ENCODE measurements at regions of chr19 and their contacts with region 1.

Region 1: DNA sequence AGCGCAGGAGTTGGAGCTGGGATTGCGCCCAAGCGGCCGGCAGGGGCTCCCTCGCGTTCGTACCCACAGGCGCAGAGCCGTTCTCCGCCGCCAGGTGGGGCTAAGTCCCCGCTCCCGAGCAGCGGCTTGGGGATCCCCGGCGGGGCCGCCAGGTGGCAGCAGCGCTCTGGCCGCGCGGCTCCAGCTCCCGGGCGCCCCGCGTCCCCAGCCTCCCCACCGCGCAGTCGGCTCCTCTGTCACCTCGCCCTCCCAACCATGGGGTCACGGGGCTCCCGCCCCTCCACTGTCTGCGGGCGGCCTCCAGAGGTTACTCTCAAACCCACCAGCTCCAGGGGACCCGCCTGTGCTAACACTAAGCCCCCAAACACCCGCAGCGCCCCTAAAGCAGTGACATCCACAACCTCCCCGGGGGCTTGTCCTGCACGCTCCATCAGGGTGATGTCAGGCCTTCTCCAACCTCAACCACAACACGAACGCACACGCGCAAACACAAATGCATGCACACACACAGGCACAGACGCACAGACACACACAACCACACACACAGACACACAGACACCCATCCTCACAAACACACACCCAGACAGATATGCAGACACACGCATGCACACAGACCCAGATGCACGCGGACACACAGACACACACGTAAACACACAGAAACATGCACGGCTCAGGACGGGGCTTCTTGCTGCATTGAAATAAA is 18.4 kb upstream of the KCTD15 start:
- DNase-seq: peak; percentile 84
- ATAC-seq: peak; percentile 93
- H3K4me3 Mint-ChIP-seq: no peak overlapping the region
- H3K27ac Mint-ChIP-seq: no peak overlapping the region
- H3K4me1 Mint-ChIP-seq: peaks cover 8% of the 10 kb centered on the region
- H3K27me3 Mint-ChIP-seq: peaks cover 17% of the 10 kb centered on the region

Region 2: GRCh38 chr19:33430674-33431277 is 347.5 kb before region 1 on chr19:
- CTCF ChIA-PET with region 1: interaction called, 13 read pairs
- DNase-seq: peak; percentile 69
- ATAC-seq: peak; percentile 86
- H3K4me3 Mint-ChIP-seq: no peak overlapping the region
- H3K27ac Mint-ChIP-seq: no peak overlapping the region
- H3K4me1 Mint-ChIP-seq: peaks cover 4% of the 10 kb centered on the region
- H3K27me3 Mint-ChIP-seq: peaks cover 3% of the 10 kb centered on the region

Region 3: GRCh38 chr19:33690378-33691029 is 87.7 kb before region 1 on chr19:
- CTCF ChIA-PET with region 1: no interaction called
- DNase-seq: no peak
- ATAC-seq: no peak
- H3K4me3 Mint-ChIP-seq: no peak overlapping the region
- H3K27ac Mint-ChIP-seq: no peak overlapping the region
- H3K4me1 Mint-ChIP-seq: no peaks in the 10 kb centered on the region
- H3K27me3 Mint-ChIP-seq: peaks cover under 1% of the 10 kb centered on the region

Region 4: DNA sequence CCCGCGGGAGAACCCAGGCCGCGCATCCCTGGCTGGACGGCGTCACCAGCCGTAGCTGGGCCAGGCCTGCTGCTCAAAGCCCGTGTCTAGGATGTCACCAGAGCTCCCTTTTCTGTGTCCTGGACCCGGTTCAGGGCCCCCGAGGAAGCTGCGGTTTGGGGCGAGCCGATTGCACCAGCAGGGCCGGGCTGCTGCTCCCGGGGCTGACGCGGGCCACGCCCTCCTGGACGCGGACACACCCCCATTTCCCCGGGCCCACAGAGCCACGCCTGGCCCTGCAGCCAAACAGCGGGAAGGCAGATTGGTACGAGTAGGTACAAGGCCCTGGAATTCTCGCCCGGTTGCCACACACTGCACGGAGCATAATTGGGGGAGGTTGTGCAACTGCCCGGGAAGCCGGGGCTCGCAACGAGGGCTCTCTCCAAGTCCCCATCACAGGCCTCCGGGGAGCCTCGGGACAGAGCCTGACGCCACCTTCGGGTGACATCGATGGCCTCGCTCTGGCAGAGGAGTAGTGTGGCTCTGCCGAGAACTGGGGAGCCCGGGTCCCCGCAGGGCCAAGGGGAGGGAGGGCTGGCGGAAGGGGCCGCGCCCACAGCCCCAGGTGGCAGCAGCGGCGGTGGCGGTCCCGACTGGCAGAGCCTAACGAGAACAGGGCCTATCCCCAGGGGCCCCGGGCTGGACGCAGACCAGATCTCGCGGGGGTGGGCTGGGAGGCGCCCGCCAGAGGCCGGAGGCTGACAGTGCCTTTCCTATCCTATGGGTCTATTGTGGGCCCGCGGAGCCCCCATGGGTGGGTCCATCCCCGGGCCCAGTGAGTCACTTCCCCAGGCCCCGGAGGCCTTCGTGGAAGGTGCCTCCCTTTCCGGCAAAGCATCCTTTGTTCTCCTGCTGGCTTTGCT is 41.9 kb after region 1 on chr19:
- CTCF ChIA-PET with region 1: interaction called, 24 read pairs
- DNase-seq: peak; percentile 79
- ATAC-seq: peak; percentile 89
- H3K4me3 Mint-ChIP-seq: peak overlapping the region; percentile 62
- H3K27ac Mint-ChIP-seq: peak overlapping the region; percentile 43
- H3K4me1 Mint-ChIP-seq: peaks cover 21% of the 10 kb centered on the region
- H3K27me3 Mint-ChIP-seq: peaks cover 23% of the 10 kb centered on the region

Region 5: GRCh38 chr19:34096020-34096915 is 318.0 kb after region 1 on chr19:
- CTCF ChIA-PET with region 1: interaction called, 51 read pairs
- DNase-seq: no peak
- ATAC-seq: no peak
- H3K4me3 Mint-ChIP-seq: no peak overlapping the region
- H3K27ac Mint-ChIP-seq: no peak overlapping the region
- H3K4me1 Mint-ChIP-seq: no peaks in the 10 kb centered on the region
- H3K27me3 Mint-ChIP-seq: peaks cover 23% of the 10 kb centered on the region

Region 6: DNA sequence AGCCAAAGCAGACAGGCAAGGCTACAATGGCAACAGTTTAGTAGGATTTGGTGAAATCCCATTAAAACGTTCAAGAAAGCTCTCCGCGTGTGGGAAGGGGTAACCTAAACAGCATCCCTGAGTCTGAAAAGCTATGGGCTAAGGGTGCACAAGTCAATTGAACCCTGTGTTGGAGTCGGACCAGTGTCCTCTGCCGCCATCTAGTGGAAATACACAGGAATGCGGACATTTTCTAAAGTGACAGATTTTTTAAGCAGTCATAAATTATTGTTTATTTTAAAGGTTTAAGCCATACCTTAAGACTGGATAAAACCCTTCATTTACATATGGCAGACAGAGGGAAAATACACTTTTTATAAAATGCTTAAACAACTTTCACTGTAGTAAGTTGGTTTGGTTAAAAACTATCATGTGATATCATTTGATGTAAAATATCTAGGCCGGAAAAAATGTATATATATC is 367.5 kb after region 1 on chr19:
- CTCF ChIA-PET with region 1: interaction called, 12 read pairs
- DNase-seq: peak; percentile 69
- ATAC-seq: peak; percentile 74
- H3K4me3 Mint-ChIP-seq: no peak overlapping the region
- H3K27ac Mint-ChIP-seq: no peak overlapping the region
- H3K4me1 Mint-ChIP-seq: no peaks in the 10 kb centered on the region
- H3K27me3 Mint-ChIP-seq: no peaks in the 10 kb centered on the region

Measured in activated CD8-positive, alpha-beta memory T cell treated with anti-CD3 and anti-CD28 coated beads, Interleukin-2, amount 10 ng/mL, durations not matched to agents 7 days and 5 days (primary cell).